ENCODE measurements at regions of chr6 and their contacts with region 1.

Region 1: GRCh38 chr6:4799912-4800311 is 23.7 kb downstream of the CDYL start:
- DNase-seq: no peak
- ATAC-seq: no peak
- H3K4me3 ChIP-seq: no peak overlapping the region
- H3K4me3 Mint-ChIP-seq: no peak overlapping the region
- H3K27ac ChIP-seq: no peak overlapping the region
- H3K27ac Mint-ChIP-seq: no peak overlapping the region
- H3K4me1 ChIP-seq: peaks cover 0 to 3% of the 10 kb centered on the region in 2 donors
- H3K4me1 Mint-ChIP-seq: peaks cover 24 to 82% (median 65%) of the 10 kb centered on the region in 7 donors
- H3K27me3 ChIP-seq: no peaks in the 10 kb centered on the region
- H3K27me3 Mint-ChIP-seq: no peaks in the 10 kb centered on the region

Region 2: GRCh38 chr6:4647414-4648365 is 152.2 kb before region 1 on chr6:
- CTCF ChIA-PET with region 1: no interaction called
- POLR2A ChIA-PET with region 1: no interaction called
- intact Hi-C with region 1: no loop called
- DNase-seq: peak in 3 of 9 donors; percentile 6 to 27 (median 6)
- ATAC-seq: peak; percentile 10
- H3K4me3 ChIP-seq: no peak overlapping the region
- H3K4me3 Mint-ChIP-seq: peak overlapping the region; percentile 6 to 72 (median 58)
- H3K27ac ChIP-seq: no peak overlapping the region
- H3K27ac Mint-ChIP-seq: no peak overlapping the region
- H3K4me1 ChIP-seq: no peaks in the 10 kb centered on the region
- H3K4me1 Mint-ChIP-seq: peaks cover 2 to 7% (median 5%) of the 10 kb centered on the region in 7 donors
- H3K27me3 ChIP-seq: peaks cover 0 to 3% of the 10 kb centered on the region in 2 donors
- H3K27me3 Mint-ChIP-seq: peaks cover 34 to 67% (median 43%) of the 10 kb centered on the region in 5 donors

Region 3: DNA sequence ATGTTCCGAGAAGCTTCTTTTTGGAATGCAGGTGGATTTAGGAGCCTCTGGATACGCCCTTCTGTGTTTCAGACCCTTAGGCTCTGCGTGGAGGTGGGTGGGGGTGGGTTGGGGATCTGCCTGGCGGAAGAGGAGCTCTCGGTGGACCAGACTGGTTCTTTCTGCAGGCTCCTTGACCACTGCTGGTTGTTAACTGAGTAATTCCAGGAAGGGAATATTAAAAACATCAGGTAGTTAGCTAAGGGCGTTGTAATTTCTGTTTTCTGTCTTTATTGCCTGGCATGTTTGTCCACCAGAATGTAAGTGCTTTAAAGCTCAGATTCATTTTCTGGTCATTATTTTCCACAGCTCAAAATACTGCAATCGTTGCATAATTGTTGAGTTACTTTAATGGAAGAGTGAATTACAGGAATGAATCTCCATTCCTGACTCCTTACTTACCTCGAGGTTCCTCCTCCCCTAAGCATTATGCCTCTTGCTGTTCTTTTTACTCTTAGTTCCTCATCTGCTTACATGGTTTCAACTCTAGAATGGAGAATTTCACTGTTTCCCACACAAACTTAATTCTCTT is 17.9 kb before region 1 on chr6:
- CTCF ChIA-PET with region 1: interaction called, 3 read pairs
- POLR2A ChIA-PET with region 1: interaction called, 3 read pairs
- intact Hi-C with region 1: loop called in 1 of 2 experiments (anchors 2 kb)
- DNase-seq: no peak
- ATAC-seq: no peak
- H3K4me3 ChIP-seq: no peak overlapping the region
- H3K4me3 Mint-ChIP-seq: peak overlapping the region in 6 of 10 donors; percentile 2 to 46 (median 20)
- H3K27ac ChIP-seq: no peak overlapping the region
- H3K27ac Mint-ChIP-seq: peak overlapping the region in 1 of 9 donors; percentile 69
- H3K4me1 ChIP-seq: peaks cover 0 to 10% of the 10 kb centered on the region in 2 donors
- H3K4me1 Mint-ChIP-seq: peaks cover 45 to 97% (median 94%) of the 10 kb centered on the region in 7 donors
- H3K27me3 ChIP-seq: no peaks in the 10 kb centered on the region
- H3K27me3 Mint-ChIP-seq: no peaks in the 10 kb centered on the region

Region 4: DNA sequence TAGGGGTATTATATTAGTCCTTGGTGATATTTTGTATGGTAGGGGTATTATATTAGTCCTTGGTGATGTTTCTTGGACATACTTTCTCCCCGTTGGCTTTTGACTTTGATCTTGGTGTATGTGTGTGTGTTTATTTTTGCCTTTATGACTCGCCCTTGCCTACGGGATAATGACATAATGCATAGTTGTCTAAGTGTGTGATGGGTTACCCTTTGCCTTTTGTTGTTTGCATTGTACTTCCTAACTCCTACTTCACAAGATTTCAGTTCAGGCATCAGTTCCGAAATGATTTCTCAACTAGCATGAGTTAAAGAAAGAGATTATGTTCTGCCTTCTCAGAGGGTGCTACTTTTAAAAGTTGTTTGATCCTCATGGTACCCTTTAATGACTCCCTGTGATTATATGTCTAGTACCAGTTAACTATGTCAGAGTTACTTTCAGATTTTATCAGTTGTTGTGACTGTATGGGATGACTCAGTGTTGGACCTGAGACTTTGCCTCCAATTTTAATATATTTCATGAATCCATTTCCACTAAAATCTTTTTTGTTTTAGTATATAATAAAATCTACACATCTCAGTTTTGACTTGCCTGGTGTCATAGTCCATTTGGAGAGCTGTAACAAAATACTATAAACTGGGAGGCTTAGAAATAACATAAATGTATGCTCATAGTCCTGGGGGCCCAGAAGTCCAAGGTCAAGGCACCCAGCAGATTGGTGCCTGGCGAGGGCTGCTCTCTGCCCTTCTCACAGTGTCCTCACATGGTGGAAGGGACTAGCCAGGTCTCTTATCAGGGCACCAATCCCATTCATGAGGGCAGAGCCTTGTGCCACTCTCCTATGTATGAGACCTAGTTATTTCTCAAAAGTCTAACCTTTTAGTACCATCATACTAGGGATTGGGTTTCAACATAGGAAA is 10.3 kb after region 1 on chr6:
- CTCF ChIA-PET with region 1: no interaction called
- POLR2A ChIA-PET with region 1: no interaction called
- intact Hi-C with region 1: no loop called
- DNase-seq: no peak
- ATAC-seq: no peak
- H3K4me3 ChIP-seq: no peak overlapping the region
- H3K4me3 Mint-ChIP-seq: peak overlapping the region in 3 of 10 donors; percentile 5 to 44 (median 18)
- H3K27ac ChIP-seq: no peak overlapping the region
- H3K27ac Mint-ChIP-seq: no peak overlapping the region
- H3K4me1 ChIP-seq: no peaks in the 10 kb centered on the region
- H3K4me1 Mint-ChIP-seq: peaks cover 16 to 89% (median 77%) of the 10 kb centered on the region in 7 donors
- H3K27me3 ChIP-seq: no peaks in the 10 kb centered on the region
- H3K27me3 Mint-ChIP-seq: no peaks in the 10 kb centered on the region

Region 5: DNA sequence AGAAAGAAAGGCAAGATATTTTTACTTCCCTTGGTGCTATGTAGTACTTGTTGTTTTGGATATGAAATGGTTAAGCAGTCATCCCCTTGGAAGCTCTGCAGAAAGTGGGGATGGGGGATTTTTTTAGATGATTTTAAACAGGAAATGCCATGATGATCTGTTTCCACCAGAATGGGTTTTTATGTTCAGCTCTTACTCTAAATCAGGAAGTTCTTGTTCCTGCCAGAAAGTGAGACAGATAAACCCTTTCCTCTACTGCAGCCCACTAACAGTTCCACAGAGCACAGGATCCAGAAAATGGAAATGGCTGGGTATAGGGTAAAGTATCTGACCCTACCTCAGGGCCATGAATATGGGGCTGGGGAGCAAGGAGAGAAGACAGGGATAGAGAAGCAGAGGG is 253.1 kb after region 1 on chr6:
- CTCF ChIA-PET with region 1: no interaction called
- POLR2A ChIA-PET with region 1: no interaction called
- intact Hi-C with region 1: no loop called
- DNase-seq: no peak
- ATAC-seq: no peak
- H3K4me3 ChIP-seq: no peak overlapping the region
- H3K4me3 Mint-ChIP-seq: no peak overlapping the region
- H3K27ac ChIP-seq: no peak overlapping the region
- H3K27ac Mint-ChIP-seq: no peak overlapping the region
- H3K4me1 ChIP-seq: no peaks in the 10 kb centered on the region
- H3K4me1 Mint-ChIP-seq: peaks cover 0 to 4% (median 0%) of the 10 kb centered on the region in 7 donors
- H3K27me3 ChIP-seq: no peaks in the 10 kb centered on the region
- H3K27me3 Mint-ChIP-seq: peaks cover 0 to 4% (median 0%) of the 10 kb centered on the region in 5 donors

Region 6: DNA sequence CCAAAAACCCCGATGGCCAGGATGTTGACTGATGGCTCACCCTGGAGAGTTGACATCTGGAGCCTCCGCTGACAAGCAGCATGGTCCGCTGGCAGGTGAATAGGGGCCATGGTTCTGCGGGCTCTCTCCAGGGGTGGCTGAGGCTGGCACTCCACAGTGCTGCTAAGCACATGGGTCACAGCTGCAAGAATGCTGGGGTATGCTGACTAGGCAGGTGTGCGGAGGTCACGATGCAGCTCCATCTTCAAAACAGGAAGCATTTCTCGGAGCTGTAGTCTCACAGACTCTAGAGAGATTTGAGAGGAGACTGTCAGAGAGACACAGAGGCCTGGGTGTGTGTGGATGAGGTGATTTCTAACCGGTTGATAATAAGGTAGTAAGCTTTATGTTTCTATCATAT is 865.3 kb after region 1 on chr6:
- CTCF ChIA-PET with region 1: no interaction called
- POLR2A ChIA-PET with region 1: no interaction called
- intact Hi-C with region 1: no loop called
- DNase-seq: peak in 7 of 9 donors; percentile 25 to 75 (median 60)
- ATAC-seq: peak; percentile 84
- H3K4me3 ChIP-seq: peak overlapping the region; percentile 4
- H3K4me3 Mint-ChIP-seq: peak overlapping the region; percentile 41 to 81 (median 74)
- H3K27ac ChIP-seq: peak overlapping the region; percentile 45
- H3K27ac Mint-ChIP-seq: peak overlapping the region; percentile 75 to 98 (median 90)
- H3K4me1 ChIP-seq: peaks cover 0 to 56% of the 10 kb centered on the region in 2 donors
- H3K4me1 Mint-ChIP-seq: peaks cover 24 to 90% (median 84%) of the 10 kb centered on the region in 7 donors
- H3K27me3 ChIP-seq: no peaks in the 10 kb centered on the region
- H3K27me3 Mint-ChIP-seq: no peaks in the 10 kb centered on the region